OCI-LY7 (cell line): ENCODE measurements at regions of chr17 and their contacts with region 1.

Region 1: DNA sequence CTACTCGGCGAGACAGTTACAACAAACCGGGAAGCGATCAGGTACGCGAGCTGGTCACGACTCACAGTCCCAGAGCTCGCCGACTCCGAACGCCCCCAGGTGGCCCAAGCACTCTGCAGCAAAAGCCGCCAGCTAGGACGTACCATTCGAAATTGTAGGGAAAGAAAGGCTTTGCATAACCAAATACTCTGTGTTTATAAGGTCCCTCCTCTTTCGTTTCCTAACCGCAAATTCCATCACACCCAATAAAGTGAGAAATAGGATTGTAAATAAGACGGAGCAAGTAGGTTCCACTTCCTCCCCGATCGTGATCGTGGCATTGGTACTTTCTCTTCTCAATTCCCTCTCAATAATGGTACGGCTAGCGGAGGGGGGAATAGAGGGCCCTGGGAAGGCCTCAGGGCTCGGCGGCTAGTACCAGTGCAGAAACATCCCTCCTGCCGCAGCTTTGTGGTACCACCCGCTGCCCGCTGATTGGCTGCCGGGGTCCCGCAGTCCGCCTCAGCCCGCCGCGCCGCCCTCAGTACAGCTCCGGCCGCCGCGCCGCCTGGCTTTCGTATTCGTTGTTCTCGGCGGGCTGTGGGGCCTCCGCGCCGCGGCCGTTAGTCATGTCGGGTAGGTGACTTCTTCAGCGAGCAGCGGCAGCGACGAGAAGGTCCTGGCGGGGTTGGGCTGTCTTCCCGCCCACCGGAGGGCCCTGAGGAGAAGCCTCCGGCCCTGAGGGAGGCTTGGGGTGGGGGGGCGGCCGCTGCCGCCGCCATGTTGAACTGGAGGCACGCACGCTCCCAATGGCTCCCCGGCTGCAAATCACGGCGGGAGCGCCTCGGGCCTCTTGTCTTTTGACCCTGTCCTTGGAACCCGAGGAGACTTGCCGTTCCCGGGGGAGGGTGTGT is at the start of gene TAF15:
- DNase-seq: peak; percentile 98
- H3K4me3 ChIP-seq: peak within 1 kb of the TSS; percentile 91
- H3K27ac ChIP-seq: peak within 1 kb of the TSS; percentile 78
- H3K4me1 ChIP-seq: peaks cover 34% of the 10 kb centered on the region
- CTCF ChIP-seq: peak; percentile 91
- total RNA-seq, gene TAF15: 61.9 and 65.9 TPM in 2 replicates

Region 2: GRCh38 chr17:35587074-35587971 is 221.9 kb before region 1 on chr17 and contains the start of gene AP2B1:
- CTCF ChIA-PET with region 1: no interaction called
- POLR2A ChIA-PET with region 1: interaction called, 3 read pairs
- intact Hi-C with region 1: loop called (anchors 5 kb)
- DNase-seq: peak; percentile 96
- H3K4me3 ChIP-seq: peak within 1 kb of the TSS; percentile 84
- H3K27ac ChIP-seq: peak within 1 kb of the TSS; percentile 75
- H3K4me1 ChIP-seq: peaks cover 24% of the 10 kb centered on the region
- CTCF ChIP-seq: no peak
- total RNA-seq, gene AP2B1: 28.9 and 51.5 TPM in 2 replicates

Region 3: GRCh38 chr17:35612924-35613521 is 196.2 kb before region 1 on chr17:
- CTCF ChIA-PET with region 1: no interaction called
- POLR2A ChIA-PET with region 1: no interaction called
- intact Hi-C with region 1: loop called (anchors 2 kb)
- DNase-seq: peak; percentile 56
- H3K4me3 ChIP-seq: no peak overlapping the region
- H3K27ac ChIP-seq: no peak overlapping the region
- H3K4me1 ChIP-seq: peaks cover 5% of the 10 kb centered on the region
- CTCF ChIP-seq: peak; percentile 97

Region 4: DNA sequence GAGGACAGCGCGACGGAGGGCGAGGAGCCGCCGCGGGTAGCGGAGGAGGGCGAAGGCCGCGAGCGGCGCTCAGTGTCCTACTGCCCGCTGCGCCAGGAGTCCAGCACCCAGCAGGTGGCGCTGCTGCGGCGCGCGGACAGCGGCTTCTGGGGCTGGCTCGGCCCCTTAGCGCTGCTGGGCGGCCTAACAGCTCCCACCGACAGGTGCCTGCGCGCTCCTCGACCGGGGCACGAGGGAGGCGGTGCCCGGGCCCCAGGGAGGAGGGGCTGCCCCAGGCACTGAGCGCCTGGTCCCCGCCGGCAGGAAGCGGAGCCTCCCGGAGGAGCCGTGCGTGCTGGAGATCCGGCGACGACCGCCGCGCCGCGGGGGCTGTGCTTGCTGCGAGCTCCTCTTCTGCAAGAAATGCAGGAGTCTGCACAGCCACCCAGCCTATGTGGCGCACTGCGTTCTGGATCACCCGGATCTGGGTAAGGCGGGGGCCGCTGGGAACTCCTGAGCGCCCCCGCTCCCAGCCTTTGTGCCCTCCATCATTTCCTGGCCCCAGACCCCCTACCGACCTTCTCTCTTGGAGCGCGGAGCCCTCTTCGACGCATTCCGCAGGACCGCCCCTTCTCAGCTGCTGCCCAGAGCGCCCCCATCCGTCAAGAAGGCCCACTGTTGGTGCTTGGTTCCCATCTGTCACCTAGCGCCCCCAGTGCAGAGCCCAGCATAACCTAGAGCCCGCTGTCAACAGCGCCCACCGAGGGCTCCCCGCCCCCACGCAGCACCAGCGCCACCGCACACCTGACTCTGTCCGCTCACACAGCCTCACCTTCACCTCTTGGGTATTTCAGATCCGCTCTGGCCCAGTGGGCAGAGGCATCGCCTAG is 44.9 kb before region 1 on chr17:
- CTCF ChIA-PET with region 1: interaction called, 21 read pairs
- POLR2A ChIA-PET with region 1: interaction called, 8 read pairs
- intact Hi-C with region 1: loop called (anchors 1 kb)
- DNase-seq: peak; percentile 93
- H3K4me3 ChIP-seq: peak overlapping the region; percentile 68
- H3K27ac ChIP-seq: peak overlapping the region; percentile 61
- H3K4me1 ChIP-seq: peaks cover 9% of the 10 kb centered on the region
- CTCF ChIP-seq: peak; percentile 81